A549 (cell line): ENCODE measurements at regions of chr22 and their contacts with region 1.

Region 1: GRCh38 chr22:40645579-40646197 is 9.2 kb upstream of the MRTFA start:
- DNase-seq: no peak
- ATAC-seq: no peak
- H3K4me3 ChIP-seq: no peak overlapping the region
- H3K27ac ChIP-seq: peak overlapping the region; percentile 82
- H3K4me1 ChIP-seq: peaks cover 25% of the 10 kb centered on the region
- CTCF ChIP-seq: no peak
- EP300 ChIP-seq: no peak
- POLR2A ChIP-seq: no peak
- RAD21 ChIP-seq: no peak

Region 2: DNA sequence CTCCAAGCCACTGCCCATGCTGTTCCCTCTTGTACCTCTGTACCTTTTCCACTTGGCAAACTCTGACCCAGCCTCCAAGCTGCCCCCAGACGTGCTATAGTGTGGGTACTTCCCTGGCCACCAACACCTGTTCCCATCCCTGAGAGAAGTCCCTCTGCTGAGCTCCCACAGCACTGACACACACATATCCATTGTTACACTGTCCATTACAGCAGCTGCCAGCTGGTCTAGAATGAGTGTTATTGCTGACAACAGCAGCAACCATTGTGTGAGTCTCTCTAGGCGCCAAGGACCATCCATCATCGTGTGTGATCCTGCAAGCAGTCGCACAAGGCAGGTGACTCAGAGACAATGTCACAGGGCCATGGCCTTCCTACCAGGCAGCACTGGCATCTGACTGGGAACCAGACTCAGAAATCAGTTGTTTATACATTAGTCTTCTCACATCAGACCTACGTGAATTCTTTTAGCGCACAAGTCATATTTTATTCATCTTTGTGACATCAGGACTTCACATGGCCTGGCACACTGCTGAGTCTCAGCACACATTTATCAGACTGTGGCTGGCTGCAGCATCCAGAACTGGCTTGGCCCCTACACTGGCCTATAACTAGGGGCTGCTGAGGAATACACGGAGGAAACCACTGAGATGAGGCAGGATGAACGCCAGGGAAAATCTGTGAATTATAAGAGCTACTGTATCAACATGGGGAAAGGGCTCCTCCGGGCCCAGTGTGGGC is 218.9 kb before region 1 on chr22:
- CTCF ChIA-PET with region 1: interaction called, 70 read pairs
- POLR2A ChIA-PET with region 1: interaction called, 3 read pairs
- DNase-seq: no peak
- ATAC-seq: no peak
- H3K4me3 ChIP-seq: no peak overlapping the region
- H3K27ac ChIP-seq: no peak overlapping the region
- H3K4me1 ChIP-seq: no peaks in the 10 kb centered on the region
- CTCF ChIP-seq: no peak
- EP300 ChIP-seq: no peak
- POLR2A ChIP-seq: no peak
- RAD21 ChIP-seq: no peak

Region 3: GRCh38 chr22:40487663-40488249 is 157.9 kb before region 1 on chr22:
- CTCF ChIA-PET with region 1: interaction called, 13 read pairs
- POLR2A ChIA-PET with region 1: no interaction called
- DNase-seq: peak; percentile 28 to 50
- ATAC-seq: peak; percentile 59 to 70; a peak in 4 of 6 replicates
- H3K4me3 ChIP-seq: no peak overlapping the region
- H3K27ac ChIP-seq: peak overlapping the region; percentile 44 to 73; a peak in 4 of 6 replicates
- H3K4me1 ChIP-seq: peaks cover 62% of the 10 kb centered on the region
- CTCF ChIP-seq: peak; percentile 66
- EP300 ChIP-seq: no peak
- POLR2A ChIP-seq: no peak
- RAD21 ChIP-seq: peak; percentile 44 to 50; a peak in 4 of 5 replicates

Region 4: DNA sequence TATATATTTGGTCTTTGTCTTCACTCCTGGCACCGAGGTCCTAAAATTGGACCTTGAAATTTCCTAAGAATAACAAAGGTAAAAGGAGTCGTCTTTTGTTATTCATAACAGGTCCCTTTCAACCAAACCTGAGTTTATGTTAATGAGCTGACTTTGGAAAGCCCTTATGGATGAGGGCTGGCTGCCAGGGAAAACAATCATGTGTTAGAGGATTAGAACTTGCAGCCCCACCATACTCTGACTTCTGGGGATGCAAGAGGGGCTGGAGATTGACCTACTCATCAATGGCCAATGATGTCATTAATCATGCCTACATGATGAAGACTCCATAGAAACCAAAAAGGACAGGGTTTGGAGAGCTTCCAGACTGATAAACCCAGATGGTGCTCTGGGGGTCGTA is 128.1 kb before region 1 on chr22:
- CTCF ChIA-PET with region 1: interaction called, 15 read pairs
- POLR2A ChIA-PET with region 1: interaction called, 11 read pairs
- DNase-seq: no peak
- ATAC-seq: no peak
- H3K4me3 ChIP-seq: no peak overlapping the region
- H3K27ac ChIP-seq: peak overlapping the region; percentile 94 to 99
- H3K4me1 ChIP-seq: peaks cover 71% of the 10 kb centered on the region
- CTCF ChIP-seq: no peak
- EP300 ChIP-seq: no peak
- POLR2A ChIP-seq: no peak
- RAD21 ChIP-seq: no peak

Region 5: DNA sequence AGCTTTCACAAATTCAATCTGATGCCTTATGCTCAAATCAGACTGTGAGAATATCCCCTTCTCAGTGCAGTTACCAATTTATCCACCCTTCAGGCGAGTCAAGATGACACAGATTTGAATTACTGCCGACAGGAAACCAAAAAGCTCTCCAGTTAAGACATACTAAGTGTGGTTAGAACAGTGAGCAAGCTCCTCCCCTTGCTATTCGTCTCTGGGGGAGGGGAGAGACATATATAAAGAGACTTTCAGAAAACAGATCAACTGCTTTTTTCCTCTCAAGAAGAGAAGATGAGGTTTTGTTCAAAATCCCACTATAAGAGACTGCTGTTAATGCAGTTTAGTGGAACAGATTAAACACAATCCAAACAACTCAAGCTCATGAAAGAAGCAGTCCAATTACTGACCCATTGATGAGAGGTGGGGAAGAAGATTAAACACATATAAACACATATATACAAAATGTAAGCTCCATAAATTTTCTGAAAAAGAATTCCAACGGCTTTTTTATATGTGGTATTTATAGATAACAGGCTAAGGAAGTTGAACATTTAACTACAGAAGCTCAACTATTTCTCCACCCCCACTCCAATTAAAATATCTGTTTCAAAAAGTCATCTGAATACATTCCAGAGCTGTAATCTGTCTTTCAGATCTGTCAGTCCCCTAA is 111.8 kb before region 1 on chr22:
- CTCF ChIA-PET with region 1: interaction called, 87 read pairs
- POLR2A ChIA-PET with region 1: interaction called, 4 read pairs
- DNase-seq: peak; percentile 47 to 70
- ATAC-seq: peak; percentile 67 to 72; a peak in 5 of 6 replicates
- H3K4me3 ChIP-seq: peak overlapping the region; percentile 45
- H3K27ac ChIP-seq: peak overlapping the region; percentile 81 to 85
- H3K4me1 ChIP-seq: peaks cover 47% of the 10 kb centered on the region
- CTCF ChIP-seq: no peak
- EP300 ChIP-seq: no peak
- POLR2A ChIP-seq: no peak
- RAD21 ChIP-seq: no peak